Calu3 (cell line): ENCODE measurements at regions of chr2 and their contacts with region 1.

Region 1: DNA sequence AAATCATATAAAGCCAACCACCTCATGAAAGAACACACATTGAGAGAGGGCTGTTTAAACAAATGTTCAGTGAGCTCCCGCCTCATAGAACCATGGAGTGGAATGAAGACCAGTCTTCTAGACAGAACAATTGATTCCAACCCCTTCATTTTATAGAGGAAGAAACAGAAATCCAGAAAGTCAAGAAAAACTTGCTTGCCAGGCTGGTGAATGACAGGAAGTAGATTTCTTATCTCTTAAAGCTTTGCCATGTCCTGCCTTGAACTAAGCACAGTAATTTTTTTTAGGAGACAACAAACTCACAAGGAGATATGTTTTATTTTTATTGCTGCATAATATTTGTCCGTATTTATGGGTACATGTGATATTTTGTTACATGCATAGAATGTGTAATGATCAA is 16.5 kb upstream of the NRP2 start:
- DNase-seq: no peak
- H3K4me3 Mint-ChIP-seq: no peak overlapping the region
- H3K27ac Mint-ChIP-seq: no peak overlapping the region
- H3K4me1 Mint-ChIP-seq: peaks cover 13% of the 10 kb centered on the region
- H3K27me3 Mint-ChIP-seq: peaks cover 18% of the 10 kb centered on the region
- CTCF ChIP-seq: no peak

Region 2: GRCh38 chr2:205722283-205722918 is 56.6 kb after region 1 on chr2:
- CTCF ChIA-PET with region 1: no interaction called
- intact Hi-C with region 1: loop called (anchors 2 kb)
- DNase-seq: no peak
- H3K4me3 Mint-ChIP-seq: no peak overlapping the region
- H3K27ac Mint-ChIP-seq: no peak overlapping the region
- H3K4me1 Mint-ChIP-seq: no peaks in the 10 kb centered on the region
- H3K27me3 Mint-ChIP-seq: no peaks in the 10 kb centered on the region
- CTCF ChIP-seq: no peak

Region 3: GRCh38 chr2:205763708-205764211 is 98.0 kb after region 1 on chr2:
- CTCF ChIA-PET with region 1: no interaction called
- intact Hi-C with region 1: no loop called
- DNase-seq: peak; percentile 40
- H3K4me3 Mint-ChIP-seq: no peak overlapping the region
- H3K27ac Mint-ChIP-seq: peak overlapping the region; percentile 74
- H3K4me1 Mint-ChIP-seq: peaks cover 29% of the 10 kb centered on the region
- H3K27me3 Mint-ChIP-seq: no peaks in the 10 kb centered on the region
- CTCF ChIP-seq: peak; percentile 27